ENCODE measurements at regions of chr1 and their contacts with region 1.

Region 1: DNA sequence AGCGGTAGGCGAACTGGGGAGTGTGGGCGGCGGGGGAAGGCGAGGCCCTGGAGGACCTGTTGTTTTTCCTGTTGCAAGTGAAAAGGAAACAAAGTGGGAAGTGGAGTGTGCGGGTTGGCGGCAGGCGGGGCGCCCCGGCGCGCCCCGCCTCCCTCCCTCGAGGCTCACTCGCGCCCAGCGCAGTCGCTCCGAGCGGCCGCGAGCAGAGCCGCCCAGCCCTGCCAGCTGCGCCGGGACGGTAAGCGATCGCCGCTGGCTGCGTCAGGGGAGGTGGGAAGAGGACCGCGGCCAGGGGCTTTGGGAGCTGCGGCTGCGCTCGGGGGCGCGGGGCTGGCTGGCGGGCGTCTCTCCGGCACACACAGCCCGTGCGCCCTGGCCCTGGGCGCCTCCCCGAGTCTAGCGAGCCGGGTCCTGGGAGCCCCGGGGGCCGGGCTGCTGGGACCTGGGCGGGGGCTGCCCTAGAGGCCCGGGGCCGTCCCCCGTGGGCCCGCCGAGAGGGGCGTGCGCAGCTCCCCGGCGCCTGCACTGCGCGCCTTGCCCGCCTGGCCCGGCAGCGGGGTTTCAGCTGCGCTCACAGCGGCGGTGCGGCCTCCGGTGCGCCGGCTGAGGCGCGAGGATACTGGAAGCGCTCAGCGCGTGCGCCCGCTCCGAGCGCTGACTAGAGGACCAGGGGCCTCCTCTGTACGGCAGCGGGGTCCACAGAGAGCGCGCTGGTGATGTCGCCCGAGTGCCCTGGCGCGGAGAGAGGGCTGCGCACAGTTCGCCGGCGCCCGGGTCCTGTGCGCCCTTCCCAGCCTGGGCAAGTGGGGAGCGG is at the start of gene PIK3CD:
- DNase-seq: peak in 8 of 9 experiments; percentile 21 to 76 (median 56)
- ATAC-seq: peak; percentile 45
- H3K4me3 ChIP-seq: peak within 1 kb of the TSS; percentile 86
- H3K4me3 Mint-ChIP-seq: peak within 1 kb of the TSS; percentile 100
- H3K27ac ChIP-seq: peak within 1 kb of the TSS; percentile 68 to 78
- H3K27ac Mint-ChIP-seq: peak within 1 kb of the TSS; percentile 99
- H3K4me1 ChIP-seq: peaks cover 59% of the 10 kb centered on the region
- H3K4me1 Mint-ChIP-seq: peaks cover 71% of the 10 kb centered on the region
- H3K27me3 ChIP-seq: no peaks in the 10 kb centered on the region
- H3K27me3 Mint-ChIP-seq: no peaks in the 10 kb centered on the region
- CTCF ChIP-seq: no peak
- total RNA-seq, gene PIK3CD: 200 to 214 TPM

Region 2: DNA sequence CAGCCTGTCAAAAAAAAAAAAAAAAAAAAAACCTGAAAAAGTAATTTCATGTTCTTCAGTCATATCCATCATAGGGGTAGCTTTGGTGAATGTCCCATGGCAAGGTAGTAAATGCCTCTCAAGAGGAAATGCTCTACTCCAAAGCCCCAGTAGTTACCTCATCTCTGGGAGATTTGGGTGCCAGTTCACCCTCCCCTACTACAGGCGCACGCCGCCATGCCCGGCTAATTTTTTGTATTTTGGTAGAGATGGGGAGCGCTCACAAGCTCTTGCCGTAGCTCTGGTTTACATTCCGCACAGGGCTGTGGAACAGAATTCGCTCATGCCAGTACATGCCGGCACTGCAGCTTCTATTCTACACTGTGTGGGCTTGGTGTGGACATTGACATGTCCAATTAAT is 13.4 kb after region 1 on chr1:
- CTCF ChIA-PET with region 1: interaction called, 6 read pairs
- POLR2A ChIA-PET with region 1: interaction called, 16 read pairs
- intact Hi-C with region 1: loop called in 1 of 2 experiments (anchors 2 kb)
- DNase-seq: peak in 2 of 9 experiments; percentile 33 to 35
- ATAC-seq: peak; percentile 53
- H3K4me3 ChIP-seq: no peak overlapping the region
- H3K4me3 Mint-ChIP-seq: peak overlapping the region; percentile 41
- H3K27ac ChIP-seq: no peak overlapping the region
- H3K27ac Mint-ChIP-seq: peak overlapping the region; percentile 78
- H3K4me1 ChIP-seq: peaks cover 55% of the 10 kb centered on the region
- H3K4me1 Mint-ChIP-seq: peaks cover 57% of the 10 kb centered on the region
- H3K27me3 ChIP-seq: no peaks in the 10 kb centered on the region
- H3K27me3 Mint-ChIP-seq: no peaks in the 10 kb centered on the region
- CTCF ChIP-seq: no peak

Region 3: DNA sequence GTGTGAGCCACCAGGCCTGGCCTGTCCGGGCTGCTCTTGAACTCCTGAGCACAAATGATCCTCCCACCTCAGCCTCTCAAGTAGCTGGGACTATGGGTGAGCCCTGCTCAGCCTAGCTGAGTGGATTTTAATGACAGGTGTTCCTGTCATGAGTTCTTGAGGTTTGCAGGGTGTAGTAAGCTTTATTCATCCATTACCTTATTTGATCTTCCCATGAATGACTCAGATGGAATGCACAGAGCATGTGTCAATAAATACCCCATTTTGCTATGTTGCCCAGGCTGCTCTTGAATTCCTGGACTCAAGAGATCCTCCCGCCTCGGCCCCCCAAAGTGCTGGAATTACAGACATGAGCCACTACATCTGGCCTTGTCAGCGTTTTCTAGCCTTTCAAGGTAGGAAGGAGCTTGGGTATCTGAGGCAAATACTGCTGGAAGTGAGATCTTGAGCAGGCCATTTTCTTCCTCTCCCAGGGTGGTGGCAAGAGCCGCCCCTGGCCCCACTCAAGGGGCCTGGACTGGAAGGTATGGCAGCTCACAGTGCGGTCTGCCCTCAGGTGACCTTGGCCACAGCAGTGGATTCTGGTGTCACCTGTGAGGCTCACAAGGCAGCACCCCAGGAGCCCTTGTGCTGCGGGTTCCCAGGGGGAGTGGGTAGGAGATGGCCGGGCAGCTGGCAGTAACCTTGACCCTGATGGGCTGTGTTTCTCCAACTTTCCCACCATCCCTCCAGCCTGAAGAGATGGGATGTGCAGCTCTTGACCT is 19.8 kb after region 1 on chr1:
- CTCF ChIA-PET with region 1: interaction called, 3 read pairs
- POLR2A ChIA-PET with region 1: interaction called, 16 read pairs
- intact Hi-C with region 1: loop called in 1 of 2 experiments (anchors 2 kb)
- DNase-seq: peak in 1 of 9 experiments; percentile 29
- ATAC-seq: peak; percentile 76
- H3K4me3 ChIP-seq: no peak overlapping the region
- H3K4me3 Mint-ChIP-seq: no peak overlapping the region
- H3K27ac ChIP-seq: peak overlapping the region in 1 of 2 experiments; percentile 39
- H3K27ac Mint-ChIP-seq: peak overlapping the region; percentile 87
- H3K4me1 ChIP-seq: peaks cover 82% of the 10 kb centered on the region
- H3K4me1 Mint-ChIP-seq: peaks cover 71% of the 10 kb centered on the region
- H3K27me3 ChIP-seq: no peaks in the 10 kb centered on the region
- H3K27me3 Mint-ChIP-seq: no peaks in the 10 kb centered on the region
- CTCF ChIP-seq: no peak

Region 4: GRCh38 chr1:9689011-9689706 is 37.4 kb after region 1 on chr1:
- CTCF ChIA-PET with region 1: interaction called, 7 read pairs
- POLR2A ChIA-PET with region 1: interaction called, 83 read pairs
- intact Hi-C with region 1: loop called (anchors 1 to 2 kb)
- DNase-seq: peak; percentile 67 to 91 (median 84)
- ATAC-seq: peak; percentile 77
- H3K4me3 ChIP-seq: peak overlapping the region; percentile 55 to 72
- H3K4me3 Mint-ChIP-seq: peak overlapping the region; percentile 81
- H3K27ac ChIP-seq: peak overlapping the region; percentile 33 to 78
- H3K27ac Mint-ChIP-seq: peak overlapping the region; percentile 82
- H3K4me1 ChIP-seq: peaks cover 77% of the 10 kb centered on the region
- H3K4me1 Mint-ChIP-seq: peaks cover 69% of the 10 kb centered on the region
- H3K27me3 ChIP-seq: no peaks in the 10 kb centered on the region
- H3K27me3 Mint-ChIP-seq: no peaks in the 10 kb centered on the region
- CTCF ChIP-seq: no peak

Region 5: GRCh38 chr1:9724706-9725476 is 73.1 kb after region 1 on chr1:
- CTCF ChIA-PET with region 1: interaction called, 69 read pairs
- POLR2A ChIA-PET with region 1: interaction called, 31 read pairs
- intact Hi-C with region 1: loop called (anchors 2 kb)
- DNase-seq: peak; percentile 47 to 84 (median 75)
- ATAC-seq: peak; percentile 47
- H3K4me3 ChIP-seq: no peak overlapping the region
- H3K4me3 Mint-ChIP-seq: peak overlapping the region; percentile 8
- H3K27ac ChIP-seq: peak overlapping the region in 1 of 2 experiments; percentile 16
- H3K27ac Mint-ChIP-seq: peak overlapping the region; percentile 80
- H3K4me1 ChIP-seq: peaks cover 82% of the 10 kb centered on the region
- H3K4me1 Mint-ChIP-seq: peaks cover 71% of the 10 kb centered on the region
- H3K27me3 ChIP-seq: no peaks in the 10 kb centered on the region
- H3K27me3 Mint-ChIP-seq: no peaks in the 10 kb centered on the region
- CTCF ChIP-seq: peak; percentile 97

Region 6: DNA sequence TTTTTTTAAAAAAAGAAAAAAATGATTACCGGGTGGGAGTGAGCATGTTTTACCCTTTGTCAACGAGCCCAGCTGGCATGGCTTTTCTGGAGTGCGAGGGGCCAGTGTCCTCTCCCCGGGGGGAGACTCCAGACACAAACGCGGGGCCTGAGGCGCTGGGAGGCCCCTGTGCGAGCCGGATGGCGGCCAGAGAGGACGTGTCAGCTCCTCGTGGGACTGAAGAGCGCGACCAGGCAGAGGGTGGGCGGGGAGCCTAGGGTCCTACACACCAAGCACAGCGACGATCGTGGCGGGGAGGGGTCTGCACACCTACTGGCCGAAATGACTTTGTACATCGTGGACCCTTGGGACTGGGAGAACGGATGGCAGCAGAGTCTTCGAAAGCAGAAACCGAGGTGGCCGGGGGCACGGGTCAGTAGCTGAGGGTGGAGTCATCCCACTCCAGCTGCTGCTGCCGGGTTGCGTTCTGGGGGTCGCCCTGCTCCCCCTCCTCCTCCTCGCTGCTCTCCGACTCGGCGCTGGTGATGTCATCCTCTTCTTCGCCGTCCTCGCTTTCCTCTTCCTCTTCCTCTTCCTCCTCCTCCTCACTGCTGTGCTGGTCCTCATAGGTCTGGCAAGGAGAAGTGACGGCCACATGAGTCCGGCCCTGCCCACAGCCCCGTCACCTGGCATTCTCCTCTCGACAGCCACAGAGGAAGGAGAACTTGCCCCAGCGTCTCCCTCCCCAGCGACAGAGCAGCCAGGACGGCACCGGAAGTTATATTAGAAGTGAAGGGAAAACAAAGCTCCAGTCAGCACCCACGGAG is 78.5 kb after region 1 on chr1:
- CTCF ChIA-PET with region 1: interaction called, 6 read pairs
- POLR2A ChIA-PET with region 1: interaction called, 4 read pairs
- intact Hi-C with region 1: loop called (anchors 2 kb)
- DNase-seq: peak in 1 of 9 experiments; percentile 44
- ATAC-seq: no peak
- H3K4me3 ChIP-seq: no peak overlapping the region
- H3K4me3 Mint-ChIP-seq: peak overlapping the region; percentile 44
- H3K27ac ChIP-seq: peak overlapping the region in 1 of 2 experiments; percentile 39
- H3K27ac Mint-ChIP-seq: peak overlapping the region; percentile 89
- H3K4me1 ChIP-seq: peaks cover 64% of the 10 kb centered on the region
- H3K4me1 Mint-ChIP-seq: peaks cover 68% of the 10 kb centered on the region
- H3K27me3 ChIP-seq: no peaks in the 10 kb centered on the region
- H3K27me3 Mint-ChIP-seq: no peaks in the 10 kb centered on the region
- CTCF ChIP-seq: no peak

Region 7: GRCh38 chr1:9823943-9824701 is 172.3 kb after region 1 on chr1 and contains the start of gene CLSTN1:
- CTCF ChIA-PET with region 1: no interaction called
- POLR2A ChIA-PET with region 1: interaction called, 4 read pairs
- intact Hi-C with region 1: loop called in 1 of 2 experiments (anchors 5 kb)
- DNase-seq: peak; percentile 76 to 93 (median 91)
- ATAC-seq: peak; percentile 72
- H3K4me3 ChIP-seq: peak within 1 kb of the TSS; percentile 58 to 72
- H3K4me3 Mint-ChIP-seq: peak within 1 kb of the TSS; percentile 96
- H3K27ac ChIP-seq: peak within 1 kb of the TSS; percentile 37 to 76
- H3K27ac Mint-ChIP-seq: peak within 1 kb of the TSS; percentile 89
- H3K4me1 ChIP-seq: peaks cover 36% of the 10 kb centered on the region
- H3K4me1 Mint-ChIP-seq: peaks cover 43% of the 10 kb centered on the region
- H3K27me3 ChIP-seq: no peaks in the 10 kb centered on the region
- H3K27me3 Mint-ChIP-seq: no peaks in the 10 kb centered on the region
- CTCF ChIP-seq: no peak
- total RNA-seq, gene CLSTN1: 50.0 to 51.1 TPM